CD8-positive, alpha-beta T cell (primary cell): ENCODE measurements at regions of chr3 and their contacts with region 1.

Region 1: DNA sequence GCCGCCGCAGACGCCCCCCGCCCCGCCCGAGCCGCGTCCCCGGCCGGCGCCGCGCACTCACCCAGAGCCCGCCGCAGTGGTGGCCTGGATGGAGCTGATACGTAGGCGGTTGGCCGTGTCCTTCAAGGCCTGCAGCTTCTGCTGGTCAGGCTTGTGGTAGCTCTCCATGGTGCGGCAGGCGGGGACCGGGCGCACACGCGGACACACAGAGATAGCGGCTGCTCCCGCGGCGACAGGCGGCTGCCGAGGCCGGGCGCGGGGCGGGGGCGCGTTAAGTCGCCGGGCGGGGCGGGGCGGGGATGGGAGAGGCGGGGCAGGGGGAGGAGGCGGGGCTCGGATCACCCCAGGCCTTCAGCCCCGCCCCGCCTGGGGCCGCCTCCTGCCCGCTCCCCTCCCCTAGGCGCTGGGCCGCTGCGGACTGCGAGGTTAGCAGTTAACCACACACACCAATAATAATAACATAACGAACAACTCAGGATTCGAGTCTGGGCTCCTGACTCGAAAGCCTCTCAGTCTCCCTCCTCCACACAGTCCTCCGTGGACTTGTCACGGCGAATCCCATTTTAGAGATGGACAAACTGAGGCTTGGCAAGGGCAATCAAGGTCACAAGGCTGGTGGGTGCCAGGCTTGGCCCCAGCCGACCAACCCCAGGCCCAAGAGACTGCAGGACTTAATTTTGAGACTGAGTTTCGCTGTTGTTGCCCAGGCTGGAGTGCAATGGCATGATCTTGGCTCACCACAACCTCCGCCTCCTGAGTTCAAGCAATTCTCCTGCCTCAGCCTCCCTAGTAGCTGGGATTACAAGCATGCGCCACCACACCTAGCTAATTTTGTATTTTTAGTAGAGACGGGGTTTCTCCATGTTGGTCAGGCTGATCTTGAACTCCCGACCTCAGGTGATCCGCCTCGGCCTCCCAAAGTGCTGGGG is at the start of gene TKT:
- DNase-seq: peak; percentile 50 to 90 (median 77)
- ATAC-seq: peak; percentile 85
- H3K4me3 ChIP-seq: peak within 1 kb of the TSS; percentile 71 to 96
- H3K4me3 Mint-ChIP-seq: peak within 1 kb of the TSS; percentile 91
- H3K27ac ChIP-seq: peak within 1 kb of the TSS; percentile 58 to 60
- H3K27ac Mint-ChIP-seq: peak within 1 kb of the TSS; percentile 82
- H3K4me1 ChIP-seq: peaks cover 27% of the 10 kb centered on the region
- H3K4me1 Mint-ChIP-seq: peaks cover 34% of the 10 kb centered on the region
- H3K27me3 ChIP-seq: no peaks in the 10 kb centered on the region
- H3K27me3 Mint-ChIP-seq: no peaks in the 10 kb centered on the region
- CTCF ChIP-seq: no peak
- total RNA-seq, gene TKT: 94.5 to 99.9 TPM

Region 2: DNA sequence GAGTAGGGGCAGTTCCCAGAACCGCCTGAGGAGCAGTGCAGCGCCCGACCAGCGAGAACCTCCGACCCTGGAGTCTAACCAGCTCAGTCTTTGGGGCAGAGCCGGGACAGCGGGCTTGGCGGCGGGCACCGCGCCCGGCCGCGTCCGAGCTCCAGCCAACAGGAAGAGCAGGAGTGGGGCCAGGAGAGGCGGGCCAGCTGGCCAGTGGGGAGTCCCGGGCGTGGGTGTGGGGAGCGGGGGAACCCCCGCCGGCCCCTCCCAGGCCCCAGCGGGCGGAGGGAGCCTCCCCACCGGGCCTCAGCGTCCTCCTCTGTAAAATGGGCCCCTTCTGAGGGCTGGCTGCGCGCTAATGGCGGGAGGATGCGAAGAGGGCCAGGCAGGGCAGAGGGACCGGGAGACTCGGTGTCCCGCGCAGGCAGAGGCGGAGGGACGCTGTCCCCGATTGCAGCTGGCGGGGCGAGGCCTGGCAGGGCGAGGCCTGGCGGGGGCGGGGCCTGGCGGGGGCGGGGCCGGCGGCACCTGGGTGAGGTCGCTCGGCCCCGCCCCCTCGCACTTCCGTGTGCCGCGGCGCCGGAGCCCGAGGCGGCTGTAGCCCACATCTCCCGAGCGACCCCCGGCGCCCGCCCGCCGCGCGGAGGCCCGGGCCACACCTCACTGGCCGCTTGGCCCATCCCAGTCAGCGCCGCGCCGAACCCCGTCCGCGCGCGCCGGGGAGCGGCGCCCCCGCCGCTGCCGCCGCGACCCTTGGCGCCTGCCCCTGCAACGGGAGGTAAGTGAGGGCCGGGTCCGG is 95.2 kb before region 1 on chr3 and contains the start of gene PRKCD:
- CTCF ChIA-PET with region 1: no interaction called
- POLR2A ChIA-PET with region 1: no interaction called
- intact Hi-C with region 1: loop called in 1 of 2 experiments (anchors 10 kb)
- DNase-seq: peak; percentile 60 to 90 (median 79)
- ATAC-seq: peak; percentile 75
- H3K4me3 ChIP-seq: peak within 1 kb of the TSS; percentile 85 to 96
- H3K4me3 Mint-ChIP-seq: peak within 1 kb of the TSS; percentile 87
- H3K27ac ChIP-seq: peak within 1 kb of the TSS; percentile 50 to 53
- H3K27ac Mint-ChIP-seq: peak within 1 kb of the TSS; percentile 85
- H3K4me1 ChIP-seq: peaks cover 29% of the 10 kb centered on the region
- H3K4me1 Mint-ChIP-seq: peaks cover 24% of the 10 kb centered on the region
- H3K27me3 ChIP-seq: peaks cover under 1 to 3% of the 10 kb centered on the region in 2 experiments
- H3K27me3 Mint-ChIP-seq: peaks cover 14% of the 10 kb centered on the region
- CTCF ChIP-seq: peak; percentile 11
- total RNA-seq, gene PRKCD: 19.6 to 20.7 TPM

Region 3: DNA sequence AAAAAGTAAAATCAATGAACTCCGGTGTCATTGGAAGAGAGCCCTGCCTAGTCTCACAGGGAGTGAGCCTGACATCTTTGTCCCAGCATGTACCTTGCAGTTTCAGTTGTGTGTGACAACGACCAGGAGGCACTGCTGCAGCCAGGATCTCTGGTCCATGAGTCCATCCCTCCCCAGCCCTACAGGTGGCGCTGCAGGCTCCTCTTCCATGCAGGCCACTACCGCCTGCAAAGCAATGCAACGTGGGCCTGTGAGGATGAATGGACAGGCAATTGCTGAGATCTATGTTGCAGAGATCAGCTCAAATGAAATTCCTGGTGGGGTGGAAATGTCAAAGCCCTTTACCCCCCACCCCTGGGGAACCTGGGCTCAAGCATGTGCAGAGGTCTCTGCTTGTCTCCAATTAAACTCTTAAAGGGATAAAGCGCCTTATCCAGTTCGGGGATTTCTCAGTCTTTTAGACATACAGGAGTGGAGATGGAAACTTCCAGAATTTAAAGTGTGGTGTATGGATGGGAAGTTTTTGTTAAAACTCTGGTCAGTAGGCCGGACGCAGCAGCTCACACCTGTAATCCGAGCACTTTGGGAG is 36.0 kb before region 1 on chr3:
- CTCF ChIA-PET with region 1: no interaction called
- POLR2A ChIA-PET with region 1: no interaction called
- intact Hi-C with region 1: loop called in 1 of 2 experiments (anchors 1 kb)
- DNase-seq: peak; percentile 52 to 85 (median 76)
- ATAC-seq: peak; percentile 93
- H3K4me3 ChIP-seq: no peak overlapping the region
- H3K4me3 Mint-ChIP-seq: no peak overlapping the region
- H3K27ac ChIP-seq: no peak overlapping the region
- H3K27ac Mint-ChIP-seq: no peak overlapping the region
- H3K4me1 ChIP-seq: no peaks in the 10 kb centered on the region
- H3K4me1 Mint-ChIP-seq: peaks cover 3% of the 10 kb centered on the region
- H3K27me3 ChIP-seq: no peaks in the 10 kb centered on the region
- H3K27me3 Mint-ChIP-seq: no peaks in the 10 kb centered on the region
- CTCF ChIP-seq: peak; percentile 92

Region 4: GRCh38 chr3:53891497-53892285 is 635.7 kb after region 1 on chr3 and contains the start of gene SELENOK:
- CTCF ChIA-PET with region 1: no interaction called
- POLR2A ChIA-PET with region 1: no interaction called
- intact Hi-C with region 1: loop called in 1 of 2 experiments (anchors 10 kb)
- DNase-seq: peak; percentile 92 to 99 (median 96)
- ATAC-seq: peak; percentile 90
- H3K4me3 ChIP-seq: peak within 1 kb of the TSS; percentile 89 to 91
- H3K4me3 Mint-ChIP-seq: peak within 1 kb of the TSS; percentile 93
- H3K27ac ChIP-seq: peak within 1 kb of the TSS; percentile 98 to 99
- H3K27ac Mint-ChIP-seq: peak within 1 kb of the TSS; percentile 99
- H3K4me1 ChIP-seq: peaks cover 37% of the 10 kb centered on the region
- H3K4me1 Mint-ChIP-seq: peaks cover 49% of the 10 kb centered on the region
- H3K27me3 ChIP-seq: no peaks in the 10 kb centered on the region
- H3K27me3 Mint-ChIP-seq: no peaks in the 10 kb centered on the region
- CTCF ChIP-seq: no peak
- total RNA-seq, gene SELENOK: 185 to 187 TPM

Region 5: DNA sequence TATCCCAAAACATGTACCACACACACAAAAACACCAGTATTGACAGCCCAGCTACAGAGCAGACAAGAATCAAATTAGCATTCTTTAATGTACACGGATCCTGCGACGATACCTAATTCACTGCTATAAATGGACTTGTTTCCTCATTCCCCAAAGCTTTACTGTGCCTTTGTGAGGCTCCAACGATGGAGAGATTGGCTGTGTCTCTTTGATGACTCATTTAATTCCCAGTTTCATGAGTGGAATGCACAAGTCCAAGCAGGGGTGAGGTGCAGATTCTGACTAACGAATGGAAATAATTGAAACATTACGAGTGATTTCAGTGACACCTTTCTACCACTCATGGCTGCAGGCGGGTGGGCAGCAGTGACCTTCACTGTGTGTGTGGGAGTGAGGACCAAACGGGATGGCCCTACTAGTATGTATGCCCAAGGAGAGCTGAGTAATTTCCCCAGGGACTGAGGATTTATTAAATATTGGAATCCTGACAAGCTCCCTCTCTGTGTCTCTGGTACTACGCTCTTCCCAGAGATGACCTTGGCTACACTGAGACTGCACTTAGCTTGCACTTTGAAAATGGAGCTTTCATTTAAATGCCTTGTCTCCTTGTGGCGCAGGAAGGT is 1023.0 kb after region 1 on chr3:
- CTCF ChIA-PET with region 1: no interaction called
- POLR2A ChIA-PET with region 1: no interaction called
- intact Hi-C with region 1: no loop called
- DNase-seq: no peak
- ATAC-seq: no peak
- H3K4me3 ChIP-seq: no peak overlapping the region
- H3K4me3 Mint-ChIP-seq: no peak overlapping the region
- H3K27ac ChIP-seq: no peak overlapping the region
- H3K27ac Mint-ChIP-seq: no peak overlapping the region
- H3K4me1 ChIP-seq: no peaks in the 10 kb centered on the region
- H3K4me1 Mint-ChIP-seq: no peaks in the 10 kb centered on the region
- H3K27me3 ChIP-seq: no peaks in the 10 kb centered on the region
- H3K27me3 Mint-ChIP-seq: peaks cover 14% of the 10 kb centered on the region
- CTCF ChIP-seq: no peak